Ascending aorta (tissue), 2 donors: ENCODE measurements at regions of chr1 and their contacts with region 1.

Region 1: DNA sequence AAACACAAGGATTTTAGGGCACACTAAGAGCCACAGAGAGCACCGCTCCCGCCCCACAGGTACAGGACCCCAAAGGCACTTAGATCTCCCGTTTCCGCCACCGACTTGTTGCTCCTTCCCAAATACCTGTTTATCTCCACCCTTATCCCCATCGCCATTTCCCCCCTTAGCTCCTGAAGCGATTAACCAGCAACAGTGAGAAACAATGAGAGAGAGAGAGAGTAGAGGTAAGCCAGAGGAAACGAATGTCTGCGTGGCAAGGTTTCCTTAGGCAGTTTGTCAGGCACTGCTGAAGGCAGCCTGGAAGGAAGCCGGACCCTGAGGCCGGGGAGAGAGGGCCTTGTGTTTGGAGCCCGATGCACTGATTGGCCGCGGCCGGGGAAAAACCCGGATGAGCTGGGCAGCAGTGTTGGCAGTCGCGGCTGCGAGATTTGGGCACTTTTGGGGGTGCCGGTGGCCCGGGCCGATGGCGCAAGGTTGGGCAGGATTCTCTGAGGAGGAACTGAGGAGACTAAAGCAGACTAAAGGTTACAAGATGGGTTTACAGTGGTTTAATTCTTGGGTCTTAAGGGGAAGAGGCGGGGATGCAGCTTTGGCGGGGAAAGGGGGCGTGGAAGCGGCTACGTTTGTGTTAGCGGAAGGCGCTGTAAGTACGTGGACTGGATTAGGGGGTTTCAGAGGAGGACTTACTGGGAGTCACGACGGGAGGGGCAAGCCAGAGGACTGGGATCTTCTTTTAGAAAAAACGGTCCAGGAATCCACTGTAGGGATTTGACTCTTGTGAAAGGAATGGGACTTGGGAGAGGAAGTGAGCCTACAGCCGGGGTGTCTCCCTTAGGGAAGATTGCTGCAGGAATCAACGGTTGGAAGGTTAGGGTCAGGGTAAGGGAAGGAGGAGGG is at the start of gene GORAB:
- DNase-seq: peak; percentile 74 to 95
- H3K4me3 ChIP-seq: peak within 1 kb of the TSS; percentile 69 to 72
- H3K27ac ChIP-seq: peak within 1 kb of the TSS; percentile 90 to 94
- H3K4me1 ChIP-seq: peaks cover 5 to 7% of the 10 kb centered on the region in 2 donors
- H3K27me3 ChIP-seq: no peaks in the 10 kb centered on the region
- CTCF ChIP-seq: no peak
- total RNA-seq, gene GORAB: 4.9 TPM

Region 2: DNA sequence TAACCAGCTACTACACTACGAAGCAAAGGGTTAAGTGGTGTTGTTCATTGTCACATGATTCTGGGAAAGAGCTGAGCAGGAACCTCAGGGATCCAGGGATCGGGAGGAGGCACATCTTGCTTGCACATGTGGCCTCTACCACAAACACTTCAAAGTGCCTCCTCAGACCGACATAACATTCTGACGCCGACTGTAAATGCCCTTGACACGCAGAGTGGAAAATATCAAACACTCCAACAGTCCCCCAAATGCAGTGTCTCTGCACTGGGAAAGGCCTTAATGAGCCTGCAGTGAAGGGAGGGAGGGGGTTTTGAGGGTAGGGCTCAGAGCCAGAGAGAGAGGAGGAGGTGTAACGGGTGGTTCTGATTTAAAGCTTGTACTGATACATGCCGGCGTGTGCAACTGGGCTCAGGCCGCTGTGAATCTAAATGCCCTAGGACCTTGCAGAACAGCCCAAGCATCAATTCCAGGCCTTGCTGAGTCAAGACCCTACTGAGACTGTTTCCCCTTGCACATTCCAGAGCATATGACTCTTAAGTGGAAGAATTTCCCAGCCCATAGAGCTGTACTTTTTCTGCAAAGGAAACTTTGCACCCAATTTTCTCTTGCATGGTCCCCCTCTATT is 222.5 kb before region 1 on chr1:
- intact Hi-C with region 1: loop called (anchors 10 kb)
- DNase-seq: peak in 1 of 2 donors; percentile 75
- H3K4me3 ChIP-seq: no peak overlapping the region
- H3K27ac ChIP-seq: peak overlapping the region; percentile 44 to 50
- H3K4me1 ChIP-seq: peaks cover 0 to 26% of the 10 kb centered on the region in 2 donors
- H3K27me3 ChIP-seq: no peaks in the 10 kb centered on the region
- CTCF ChIP-seq: no peak

Region 3: GRCh38 chr1:170410401-170411166 is 121.4 kb before region 1 on chr1:
- intact Hi-C with region 1: loop called (anchors 5 kb)
- DNase-seq: no peak
- H3K4me3 ChIP-seq: no peak overlapping the region
- H3K27ac ChIP-seq: peak overlapping the region; percentile 85 to 90
- H3K4me1 ChIP-seq: peaks cover 3 to 27% of the 10 kb centered on the region in 2 donors
- H3K27me3 ChIP-seq: no peaks in the 10 kb centered on the region
- CTCF ChIP-seq: no peak

Region 4: DNA sequence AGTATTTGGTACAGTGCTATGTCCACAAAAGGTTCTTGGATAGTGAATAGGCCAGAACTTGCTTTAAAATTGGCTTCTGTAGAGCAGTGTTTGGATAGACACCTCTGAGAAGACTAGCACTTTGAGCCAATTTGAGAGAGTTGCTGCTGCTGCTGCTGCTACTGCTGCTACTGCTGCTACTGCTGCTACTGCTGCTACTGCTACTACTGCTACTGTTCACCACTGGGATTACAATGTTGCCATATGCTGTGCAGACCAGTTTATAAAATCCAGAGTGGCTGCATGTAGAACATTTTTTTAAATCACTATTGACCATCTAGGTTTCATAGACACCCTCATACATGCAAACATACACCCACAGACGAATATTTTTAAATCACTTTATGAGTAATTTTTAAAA is 15.2 kb after region 1 on chr1:
- intact Hi-C with region 1: no loop called
- DNase-seq: no peak
- H3K4me3 ChIP-seq: no peak overlapping the region
- H3K27ac ChIP-seq: no peak overlapping the region
- H3K4me1 ChIP-seq: no peaks in the 10 kb centered on the region
- H3K27me3 ChIP-seq: no peaks in the 10 kb centered on the region
- CTCF ChIP-seq: no peak

Region 5: GRCh38 chr1:170562646-170563338 is 30.8 kb after region 1 on chr1:
- intact Hi-C with region 1: loop called (anchors 2 kb)
- DNase-seq: peak; percentile 53 to 82
- H3K4me3 ChIP-seq: peak overlapping the region; percentile 17 to 48
- H3K27ac ChIP-seq: peak overlapping the region; percentile 74 to 78
- H3K4me1 ChIP-seq: peaks cover 4 to 23% of the 10 kb centered on the region in 2 donors
- H3K27me3 ChIP-seq: no peaks in the 10 kb centered on the region
- CTCF ChIP-seq: no peak

Region 6: DNA sequence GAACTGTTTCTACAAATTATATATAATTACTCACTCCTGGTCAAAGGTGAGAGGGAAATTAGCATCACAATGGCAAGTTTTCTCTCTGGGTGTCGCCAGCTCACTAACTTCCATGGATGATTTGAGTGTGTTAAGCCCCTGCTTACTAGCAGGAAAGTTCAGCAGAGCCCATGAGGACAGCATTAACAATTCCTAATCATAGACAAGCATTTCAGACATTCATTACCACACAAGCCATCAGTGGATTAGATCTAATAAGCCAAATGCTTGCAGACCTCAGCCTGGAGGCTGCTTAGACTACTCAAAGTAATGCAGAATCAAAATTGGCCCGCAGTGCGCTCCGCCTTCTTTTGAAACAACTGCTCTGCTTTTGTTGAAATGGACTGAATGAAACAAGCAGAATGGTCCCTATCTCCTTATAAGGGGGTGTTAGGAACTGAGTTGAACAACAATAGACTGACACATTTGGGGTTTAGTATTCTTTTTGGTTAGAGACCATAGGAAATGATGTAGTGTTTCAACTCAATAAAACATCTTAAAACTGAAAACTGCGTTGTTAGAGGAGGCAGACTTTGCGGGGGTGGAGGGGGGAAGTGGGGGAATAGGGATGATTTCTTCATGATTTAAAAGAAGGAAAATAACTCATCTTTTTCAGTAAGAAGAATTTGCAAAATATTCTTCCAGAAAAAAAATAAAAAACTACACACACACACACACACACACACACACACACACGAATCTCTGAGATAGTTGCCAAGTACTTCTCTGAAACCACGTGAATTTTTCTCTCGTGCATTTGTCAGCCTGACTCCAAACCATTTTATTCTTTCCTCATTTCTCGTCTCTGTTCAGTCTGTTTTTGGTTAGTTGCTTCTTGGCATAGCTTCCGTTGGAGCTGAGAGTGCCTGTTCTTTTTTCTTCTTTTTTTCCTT is 54.6 kb after region 1 on chr1:
- intact Hi-C with region 1: loop called (anchors 2 kb)
- DNase-seq: peak in 1 of 2 donors; percentile 70
- H3K4me3 ChIP-seq: peak overlapping the region; percentile 32 to 64
- H3K27ac ChIP-seq: peak overlapping the region; percentile 81 to 85
- H3K4me1 ChIP-seq: peaks cover 0 to 11% of the 10 kb centered on the region in 2 donors
- H3K27me3 ChIP-seq: no peaks in the 10 kb centered on the region
- CTCF ChIP-seq: no peak

Region 7: GRCh38 chr1:170765712-170766330 is 233.8 kb after region 1 on chr1:
- intact Hi-C with region 1: loop called (anchors 10 kb)
- DNase-seq: no peak
- H3K4me3 ChIP-seq: no peak overlapping the region
- H3K27ac ChIP-seq: no peak overlapping the region
- H3K4me1 ChIP-seq: no peaks in the 10 kb centered on the region
- H3K27me3 ChIP-seq: no peaks in the 10 kb centered on the region
- CTCF ChIP-seq: peak; percentile 59 to 72 (median 65)